ENCODE measurements at regions of chr2 and their contacts with region 1.

Region 1: GRCh38 chr2:101759162-101759561 is 61.7 kb downstream of the MAP4K4 start:
- DNase-seq: no peak
- H3K4me3 ChIP-seq: no peak overlapping the region
- H3K27ac ChIP-seq: no peak overlapping the region
- H3K4me1 ChIP-seq: peaks cover 53% of the 10 kb centered on the region
- CTCF ChIP-seq: no peak

Region 2: GRCh38 chr2:101692041-101692440 is 67.1 kb before region 1 on chr2:
- CTCF ChIA-PET with region 1: no interaction called
- POLR2A ChIA-PET with region 1: no interaction called
- intact Hi-C with region 1: no loop called
- DNase-seq: no peak
- H3K4me3 ChIP-seq: no peak overlapping the region
- H3K27ac ChIP-seq: no peak overlapping the region
- H3K4me1 ChIP-seq: peaks cover 7% of the 10 kb centered on the region
- CTCF ChIP-seq: no peak

Region 3: DNA sequence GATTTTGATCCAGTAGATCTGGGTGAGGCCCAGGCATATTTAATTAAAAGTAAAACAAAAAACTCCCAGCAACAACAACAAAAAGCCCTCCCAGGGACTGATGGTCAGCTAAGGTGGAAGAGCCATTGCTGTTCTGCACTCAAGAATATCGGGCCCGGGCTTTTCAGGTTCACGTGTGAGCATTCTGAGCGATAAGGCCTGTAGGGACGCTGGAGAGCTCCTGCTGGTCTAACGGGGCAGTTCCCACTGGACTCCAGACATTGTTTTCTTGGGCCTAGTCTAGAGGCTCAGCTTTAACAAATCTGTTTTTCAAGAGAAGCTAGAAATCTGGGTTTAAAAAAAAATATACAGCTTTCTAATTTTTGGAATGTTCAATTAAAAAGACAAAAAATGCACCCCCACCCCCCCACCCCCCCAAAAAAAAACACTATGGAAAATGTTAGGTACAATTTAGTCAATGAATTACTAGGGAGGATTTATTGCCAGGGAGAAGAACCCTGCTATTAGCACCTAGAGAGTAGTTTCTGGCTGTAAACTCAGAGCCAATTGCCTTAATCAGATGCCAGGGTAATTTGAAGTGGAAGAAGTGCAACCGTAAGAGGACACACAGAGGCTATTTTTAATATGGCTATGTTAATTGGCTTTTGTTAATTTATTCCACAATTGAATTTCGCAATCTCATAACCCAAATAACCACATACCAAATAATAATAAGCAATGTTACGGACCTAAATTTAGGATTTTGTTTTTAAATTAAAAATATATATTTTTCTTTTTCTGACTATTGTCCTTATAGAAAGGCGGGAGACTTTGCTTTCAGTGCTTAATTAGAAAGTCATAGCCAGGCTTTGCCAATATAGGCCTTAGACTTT is 17.2 kb after region 1 on chr2:
- CTCF ChIA-PET with region 1: no interaction called
- POLR2A ChIA-PET with region 1: interaction called, 11 read pairs
- intact Hi-C with region 1: no loop called
- DNase-seq: no peak
- H3K4me3 ChIP-seq: no peak overlapping the region
- H3K27ac ChIP-seq: no peak overlapping the region
- H3K4me1 ChIP-seq: peaks cover 32% of the 10 kb centered on the region
- CTCF ChIP-seq: no peak

Region 4: GRCh38 chr2:101823347-101823791 is 64.2 kb after region 1 on chr2:
- CTCF ChIA-PET with region 1: no interaction called
- POLR2A ChIA-PET with region 1: interaction called, 4 read pairs
- intact Hi-C with region 1: loop called (anchors 5 kb)
- DNase-seq: peak; percentile 53
- H3K4me3 ChIP-seq: no peak overlapping the region
- H3K27ac ChIP-seq: no peak overlapping the region
- H3K4me1 ChIP-seq: peaks cover 27% of the 10 kb centered on the region
- CTCF ChIP-seq: peak; percentile 79

Region 5: DNA sequence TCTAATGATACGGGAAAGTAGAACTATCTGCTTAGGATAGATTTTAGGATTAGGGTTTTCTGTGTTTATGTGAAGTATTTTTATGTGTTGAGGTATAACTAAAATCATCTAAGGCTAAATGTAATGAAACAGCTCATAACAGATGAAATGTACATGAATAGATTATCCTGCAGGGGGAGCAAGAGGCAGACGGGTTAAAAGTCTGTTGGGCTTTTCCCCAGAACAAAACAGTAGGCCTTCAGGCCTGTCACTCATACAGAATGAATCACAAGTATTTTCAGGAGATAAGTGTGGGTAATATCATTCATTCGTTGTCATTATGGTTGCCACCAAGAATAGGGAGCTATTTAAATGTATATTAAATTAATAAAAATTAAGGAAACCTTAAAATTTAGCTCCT is 124.7 kb after region 1 on chr2:
- CTCF ChIA-PET with region 1: no interaction called
- POLR2A ChIA-PET with region 1: no interaction called
- intact Hi-C with region 1: no loop called
- DNase-seq: peak; percentile 34
- H3K4me3 ChIP-seq: no peak overlapping the region
- H3K27ac ChIP-seq: no peak overlapping the region
- H3K4me1 ChIP-seq: no peaks in the 10 kb centered on the region
- CTCF ChIP-seq: peak; percentile 77

Measured in OCI-LY7 (cell line).